ENCODE measurements at regions of chr2 and their contacts with region 1.

Region 1: DNA sequence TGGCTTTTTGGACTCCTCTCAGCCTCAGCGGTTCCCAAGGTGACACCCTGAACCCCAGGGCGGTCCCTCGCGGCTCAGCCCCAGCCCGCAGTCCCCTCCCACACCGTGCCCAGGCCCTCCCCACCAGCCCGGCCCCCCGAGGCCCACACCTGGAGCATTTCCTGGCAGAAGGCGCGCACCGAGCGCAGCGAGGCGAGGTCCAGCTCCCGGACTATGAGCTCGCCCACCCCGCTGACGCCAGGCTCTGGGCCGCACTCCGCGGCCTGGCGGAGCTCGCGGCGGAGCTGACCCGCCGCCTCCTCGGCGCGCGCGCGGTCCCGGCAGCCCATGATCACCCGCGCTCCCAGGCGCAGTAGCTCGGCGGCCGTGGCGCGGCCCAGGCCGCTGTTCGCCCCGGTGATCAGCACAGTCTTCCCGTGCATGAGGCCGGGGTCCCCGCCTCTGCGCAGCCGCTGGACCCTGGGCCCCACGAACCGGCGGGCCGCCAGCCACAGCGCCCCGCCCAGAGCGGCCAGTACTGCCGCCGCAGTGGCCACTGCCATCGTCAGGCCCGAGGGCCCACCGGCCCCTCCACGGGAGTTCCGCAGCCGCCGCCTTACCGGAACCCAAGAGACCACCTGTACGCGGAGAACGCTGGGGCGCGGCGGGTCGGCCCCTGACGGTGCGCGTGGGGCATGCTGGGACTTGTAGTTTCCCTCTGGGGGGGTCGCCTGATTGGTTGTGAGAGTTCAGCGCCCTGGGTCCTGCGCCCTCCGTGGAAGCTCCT is at the start of gene RDH14:
- DNase-seq: peak; percentile 88
- H3K4me3 ChIP-seq: peak within 1 kb of the TSS; percentile 50 to 81 (median 62)
- H3K27ac ChIP-seq: peak within 1 kb of the TSS; percentile 74
- H3K4me1 ChIP-seq: peaks cover 10% of the 10 kb centered on the region
- H3K27me3 ChIP-seq: no peaks in the 10 kb centered on the region
- CTCF ChIP-seq: no peak
- total RNA-seq, gene RDH14: 19.5 to 20.0 TPM

Region 2: GRCh38 chr2:18605115-18605514 is 44.9 kb after region 1 on chr2:
- CTCF ChIA-PET with region 1: no interaction called
- dilution Hi-C with region 1: loop called (anchors 5 kb)
- in situ Hi-C with region 1: no loop called
- intact Hi-C with region 1: no loop called
- DNase-seq: no peak
- H3K4me3 ChIP-seq: no peak overlapping the region
- H3K27ac ChIP-seq: no peak overlapping the region
- H3K4me1 ChIP-seq: no peaks in the 10 kb centered on the region
- H3K27me3 ChIP-seq: no peaks in the 10 kb centered on the region
- CTCF ChIP-seq: no peak

Region 3: GRCh38 chr2:18623782-18624181 is 63.6 kb after region 1 on chr2:
- CTCF ChIA-PET with region 1: no interaction called
- dilution Hi-C with region 1: no loop called
- in situ Hi-C with region 1: no loop called
- intact Hi-C with region 1: loop called (anchors 5 kb)
- DNase-seq: peak; percentile 84
- H3K4me3 ChIP-seq: no peak overlapping the region
- H3K27ac ChIP-seq: peak overlapping the region; percentile 45
- H3K4me1 ChIP-seq: peaks cover 48% of the 10 kb centered on the region
- H3K27me3 ChIP-seq: no peaks in the 10 kb centered on the region
- CTCF ChIP-seq: no peak

Region 4: GRCh38 chr2:18792226-18792629 is 232.0 kb after region 1 on chr2:
- CTCF ChIA-PET with region 1: no interaction called
- dilution Hi-C with region 1: no loop called
- in situ Hi-C with region 1: no loop called
- intact Hi-C with region 1: no loop called
- DNase-seq: no peak
- H3K4me3 ChIP-seq: no peak overlapping the region
- H3K27ac ChIP-seq: no peak overlapping the region
- H3K4me1 ChIP-seq: no peaks in the 10 kb centered on the region
- H3K27me3 ChIP-seq: no peaks in the 10 kb centered on the region
- CTCF ChIP-seq: no peak

Region 5: DNA sequence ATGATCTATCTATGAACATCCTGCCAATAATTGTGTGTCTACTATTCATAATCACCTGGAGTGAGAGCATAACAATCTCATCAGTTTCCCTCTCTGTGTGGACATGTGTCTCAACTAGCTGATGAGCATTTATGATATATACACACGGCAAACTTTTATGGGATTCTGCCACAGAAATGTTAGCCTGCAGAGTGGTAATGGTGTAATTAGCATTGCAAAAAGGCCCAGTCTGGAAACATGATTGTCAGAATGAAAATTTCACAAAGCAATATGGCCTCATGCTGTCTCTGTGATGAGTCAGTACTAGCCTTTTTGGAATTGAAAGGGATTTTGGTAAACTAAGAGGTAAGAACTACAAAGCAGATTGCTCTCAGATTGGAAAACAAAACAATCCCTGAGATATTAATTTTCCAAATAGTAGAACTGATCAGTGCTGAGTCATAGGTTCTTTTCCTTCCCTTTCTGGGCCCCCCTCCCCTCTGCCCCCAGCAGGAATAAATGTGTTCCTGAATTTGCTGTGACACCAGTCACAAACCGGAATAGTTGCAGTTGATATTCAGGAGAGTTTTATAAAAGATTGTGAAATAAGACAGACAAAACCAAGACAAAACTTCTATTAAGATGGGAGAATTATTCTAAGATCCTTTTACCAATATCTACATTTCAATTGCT is 609.1 kb after region 1 on chr2:
- CTCF ChIA-PET with region 1: no interaction called
- dilution Hi-C with region 1: no loop called
- in situ Hi-C with region 1: no loop called
- intact Hi-C with region 1: no loop called
- DNase-seq: no peak
- H3K4me3 ChIP-seq: no peak overlapping the region
- H3K27ac ChIP-seq: no peak overlapping the region
- H3K4me1 ChIP-seq: no peaks in the 10 kb centered on the region
- H3K27me3 ChIP-seq: no peaks in the 10 kb centered on the region
- CTCF ChIP-seq: no peak